ENCODE measurements at regions of chr7 and their contacts with region 1.

Region 1: GRCh38 chr7:120987683-120988590 is 574 bp upstream of the CPED1 start:
- DNase-seq: peak; percentile 88
- H3K4me3 Mint-ChIP-seq: peak overlapping the region; percentile 61
- H3K27ac Mint-ChIP-seq: no peak overlapping the region
- H3K4me1 Mint-ChIP-seq: peaks cover 17% of the 10 kb centered on the region
- H3K27me3 Mint-ChIP-seq: peaks cover 42% of the 10 kb centered on the region

Region 2: DNA sequence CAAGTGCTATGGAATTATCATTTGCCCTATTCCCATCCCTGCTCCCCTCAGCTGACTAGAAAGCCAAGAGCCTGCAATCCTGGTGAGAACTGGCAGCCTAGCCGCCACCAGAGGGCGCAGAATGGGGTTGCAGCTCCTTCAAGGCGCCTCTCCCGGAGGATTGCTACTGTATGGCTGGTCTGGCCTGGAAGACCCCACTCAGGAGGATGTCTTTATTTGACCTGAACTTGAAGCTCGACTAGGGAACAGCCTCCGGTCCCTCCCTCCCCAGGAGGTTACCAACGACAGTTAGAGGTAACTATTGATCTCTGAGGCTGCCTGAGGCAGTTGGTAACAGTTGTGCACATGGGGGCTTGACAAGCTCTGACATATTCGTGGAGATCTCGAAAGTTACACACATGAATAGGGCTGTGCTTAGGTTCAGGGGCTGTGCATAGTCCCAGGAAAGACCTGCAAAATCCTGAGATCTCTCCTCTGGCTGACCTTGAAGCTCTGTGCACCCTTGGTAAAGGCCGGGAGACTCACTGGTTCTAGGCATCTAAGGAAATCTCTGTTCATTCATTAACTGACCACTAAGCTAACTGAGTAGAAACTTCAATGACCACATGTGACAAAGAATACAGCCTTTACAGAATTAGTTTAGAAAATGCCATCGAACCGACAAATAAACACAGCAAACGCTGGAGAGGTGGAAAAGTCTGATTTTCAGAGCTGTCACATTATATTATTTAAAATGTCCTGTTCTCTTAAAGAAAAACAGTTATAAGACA is 195.7 kb before region 1 on chr7:
- CTCF ChIA-PET with region 1: interaction called, 6 read pairs
- POLR2A ChIA-PET with region 1: no interaction called
- intact Hi-C with region 1: loop called (anchors 5 kb)
- DNase-seq: peak; percentile 71
- H3K4me3 Mint-ChIP-seq: no peak overlapping the region
- H3K27ac Mint-ChIP-seq: no peak overlapping the region
- H3K4me1 Mint-ChIP-seq: no peaks in the 10 kb centered on the region
- H3K27me3 Mint-ChIP-seq: no peaks in the 10 kb centered on the region

Region 3: GRCh38 chr7:120950539-120951308 is 37.2 kb before region 1 on chr7 and contains the start of gene ING3:
- CTCF ChIA-PET with region 1: no interaction called
- POLR2A ChIA-PET with region 1: no interaction called
- intact Hi-C with region 1: loop called (anchors 2 kb)
- DNase-seq: peak; percentile 98
- H3K4me3 Mint-ChIP-seq: peak within 1 kb of the TSS; percentile 94
- H3K27ac Mint-ChIP-seq: peak within 1 kb of the TSS; percentile 98
- H3K4me1 Mint-ChIP-seq: peaks cover 22% of the 10 kb centered on the region
- H3K27me3 Mint-ChIP-seq: peaks cover 9% of the 10 kb centered on the region
- total RNA-seq, gene ING3: 23.5 to 24.8 TPM

Region 4: GRCh38 chr7:121057878-121058277 is 69.9 kb after region 1 on chr7:
- CTCF ChIA-PET with region 1: interaction called, 10 read pairs
- POLR2A ChIA-PET with region 1: no interaction called
- intact Hi-C with region 1: no loop called
- DNase-seq: no peak
- H3K4me3 Mint-ChIP-seq: no peak overlapping the region
- H3K27ac Mint-ChIP-seq: no peak overlapping the region
- H3K4me1 Mint-ChIP-seq: no peaks in the 10 kb centered on the region
- H3K27me3 Mint-ChIP-seq: peaks cover 9% of the 10 kb centered on the region

Region 5: GRCh38 chr7:121107923-121108498 is 120.1 kb after region 1 on chr7:
- CTCF ChIA-PET with region 1: interaction called, 41 read pairs
- POLR2A ChIA-PET with region 1: no interaction called
- intact Hi-C with region 1: loop called (anchors 1 kb)
- DNase-seq: no peak
- H3K4me3 Mint-ChIP-seq: no peak overlapping the region
- H3K27ac Mint-ChIP-seq: no peak overlapping the region
- H3K4me1 Mint-ChIP-seq: no peaks in the 10 kb centered on the region
- H3K27me3 Mint-ChIP-seq: peaks cover 6% of the 10 kb centered on the region

Region 6: GRCh38 chr7:121994625-121995410 is 1006.9 kb after region 1 on chr7:
- CTCF ChIA-PET with region 1: no interaction called
- POLR2A ChIA-PET with region 1: no interaction called
- intact Hi-C with region 1: loop called (anchors 5 kb)
- DNase-seq: peak; percentile 54
- H3K4me3 Mint-ChIP-seq: no peak overlapping the region
- H3K27ac Mint-ChIP-seq: no peak overlapping the region
- H3K4me1 Mint-ChIP-seq: no peaks in the 10 kb centered on the region
- H3K27me3 Mint-ChIP-seq: no peaks in the 10 kb centered on the region